Caco-2 (cell line): ENCODE measurements at regions of chr2 and their contacts with region 1.

Region 1: GRCh38 chr2:54558188-54559005 is 102.3 kb downstream of the SPTBN1 start:
- DNase-seq: peak; percentile 80
- H3K4me3 ChIP-seq: peak overlapping the region; percentile 84
- H3K4me3 Mint-ChIP-seq: peak overlapping the region; percentile 87
- H3K27ac Mint-ChIP-seq: peak overlapping the region; percentile 73
- H3K4me1 ChIP-seq: peaks cover 42% of the 10 kb centered on the region
- H3K4me1 Mint-ChIP-seq: peaks cover 52% of the 10 kb centered on the region
- H3K27me3 ChIP-seq: no peaks in the 10 kb centered on the region
- H3K27me3 Mint-ChIP-seq: no peaks in the 10 kb centered on the region
- CTCF ChIP-seq: no peak

Region 2: GRCh38 chr2:54341656-54342055 is 216.7 kb before region 1 on chr2:
- CTCF ChIA-PET with region 1: no interaction called
- POLR2A ChIA-PET with region 1: no interaction called
- intact Hi-C with region 1: no loop called
- DNase-seq: no peak
- H3K4me3 ChIP-seq: no peak overlapping the region
- H3K4me3 Mint-ChIP-seq: no peak overlapping the region
- H3K27ac Mint-ChIP-seq: no peak overlapping the region
- H3K4me1 ChIP-seq: no peaks in the 10 kb centered on the region
- H3K4me1 Mint-ChIP-seq: no peaks in the 10 kb centered on the region
- H3K27me3 ChIP-seq: no peaks in the 10 kb centered on the region
- H3K27me3 Mint-ChIP-seq: peaks cover 10% of the 10 kb centered on the region
- CTCF ChIP-seq: no peak

Region 3: DNA sequence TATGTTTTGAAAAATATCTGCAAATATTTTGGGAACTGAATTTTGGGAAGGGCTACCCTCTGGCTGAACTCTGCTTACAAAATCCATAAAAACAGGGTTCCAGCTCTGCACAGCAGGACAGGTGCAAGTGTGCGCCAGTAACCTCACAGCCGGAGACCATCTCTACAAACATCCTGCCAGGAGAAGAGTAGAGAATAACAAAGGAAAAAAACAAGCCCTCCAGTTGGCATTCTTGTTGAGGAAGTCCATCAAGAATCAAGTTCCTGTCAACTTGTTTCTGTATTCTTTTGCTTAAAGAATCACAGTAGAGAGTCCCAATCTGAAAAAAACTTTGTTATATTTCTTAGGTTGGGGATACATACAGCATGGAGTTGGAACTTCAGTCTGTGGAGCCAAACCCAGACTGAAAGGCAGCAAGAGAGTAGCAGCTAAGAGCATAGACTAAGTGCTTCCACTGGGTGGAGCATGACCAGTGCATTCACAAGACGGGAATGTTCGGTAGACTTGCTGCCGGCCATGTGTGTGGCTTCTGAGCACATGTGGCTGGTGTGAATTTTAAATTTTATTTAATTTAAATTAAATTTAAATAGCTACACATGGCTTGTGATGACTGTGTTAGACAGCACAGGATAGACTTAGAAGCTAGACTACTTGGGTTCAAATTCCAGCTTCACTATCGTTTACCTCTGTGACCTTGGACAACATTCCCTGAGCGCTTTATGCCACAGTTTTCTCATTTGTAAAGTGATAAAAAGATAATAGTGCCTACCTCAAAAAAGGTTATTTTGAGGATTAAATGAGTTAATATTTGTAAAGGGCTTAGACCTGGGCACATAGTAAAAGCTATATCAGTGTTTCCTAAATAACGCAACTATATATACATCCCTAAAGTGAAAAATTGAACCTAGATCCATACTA is 60.4 kb before region 1 on chr2:
- CTCF ChIA-PET with region 1: no interaction called
- POLR2A ChIA-PET with region 1: no interaction called
- intact Hi-C with region 1: no loop called
- DNase-seq: peak; percentile 38 to 50
- H3K4me3 ChIP-seq: no peak overlapping the region
- H3K4me3 Mint-ChIP-seq: no peak overlapping the region
- H3K27ac Mint-ChIP-seq: no peak overlapping the region
- H3K4me1 ChIP-seq: no peaks in the 10 kb centered on the region
- H3K4me1 Mint-ChIP-seq: peaks cover 12% of the 10 kb centered on the region
- H3K27me3 ChIP-seq: no peaks in the 10 kb centered on the region
- H3K27me3 Mint-ChIP-seq: no peaks in the 10 kb centered on the region
- CTCF ChIP-seq: peak; percentile 40 to 44

Region 4: DNA sequence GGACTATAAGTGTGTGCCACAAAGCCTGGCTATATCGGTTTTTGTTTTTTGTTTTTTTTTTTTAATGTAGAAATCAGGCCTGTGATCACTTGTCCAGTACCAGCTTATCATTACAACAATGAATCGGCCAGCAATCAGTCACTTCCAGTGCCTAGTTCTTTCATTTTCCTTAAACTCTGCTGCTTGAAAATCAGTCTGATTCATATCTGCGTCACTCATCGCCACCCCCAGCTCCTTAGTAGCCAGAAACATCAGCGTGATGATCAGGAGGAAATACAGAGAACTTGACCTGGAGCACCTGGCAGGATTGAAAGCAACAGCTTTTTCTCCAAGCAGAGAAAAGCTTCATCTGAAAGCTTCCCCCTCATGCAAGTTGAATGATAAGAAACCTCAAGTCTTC is 26.8 kb before region 1 on chr2:
- CTCF ChIA-PET with region 1: no interaction called
- POLR2A ChIA-PET with region 1: interaction called, 3 read pairs
- intact Hi-C with region 1: loop called (anchors 1 kb)
- DNase-seq: no peak
- H3K4me3 ChIP-seq: no peak overlapping the region
- H3K4me3 Mint-ChIP-seq: no peak overlapping the region
- H3K27ac Mint-ChIP-seq: peak overlapping the region; percentile 99
- H3K4me1 ChIP-seq: peaks cover 39% of the 10 kb centered on the region
- H3K4me1 Mint-ChIP-seq: peaks cover 60% of the 10 kb centered on the region
- H3K27me3 ChIP-seq: no peaks in the 10 kb centered on the region
- H3K27me3 Mint-ChIP-seq: no peaks in the 10 kb centered on the region
- CTCF ChIP-seq: no peak

Region 5: DNA sequence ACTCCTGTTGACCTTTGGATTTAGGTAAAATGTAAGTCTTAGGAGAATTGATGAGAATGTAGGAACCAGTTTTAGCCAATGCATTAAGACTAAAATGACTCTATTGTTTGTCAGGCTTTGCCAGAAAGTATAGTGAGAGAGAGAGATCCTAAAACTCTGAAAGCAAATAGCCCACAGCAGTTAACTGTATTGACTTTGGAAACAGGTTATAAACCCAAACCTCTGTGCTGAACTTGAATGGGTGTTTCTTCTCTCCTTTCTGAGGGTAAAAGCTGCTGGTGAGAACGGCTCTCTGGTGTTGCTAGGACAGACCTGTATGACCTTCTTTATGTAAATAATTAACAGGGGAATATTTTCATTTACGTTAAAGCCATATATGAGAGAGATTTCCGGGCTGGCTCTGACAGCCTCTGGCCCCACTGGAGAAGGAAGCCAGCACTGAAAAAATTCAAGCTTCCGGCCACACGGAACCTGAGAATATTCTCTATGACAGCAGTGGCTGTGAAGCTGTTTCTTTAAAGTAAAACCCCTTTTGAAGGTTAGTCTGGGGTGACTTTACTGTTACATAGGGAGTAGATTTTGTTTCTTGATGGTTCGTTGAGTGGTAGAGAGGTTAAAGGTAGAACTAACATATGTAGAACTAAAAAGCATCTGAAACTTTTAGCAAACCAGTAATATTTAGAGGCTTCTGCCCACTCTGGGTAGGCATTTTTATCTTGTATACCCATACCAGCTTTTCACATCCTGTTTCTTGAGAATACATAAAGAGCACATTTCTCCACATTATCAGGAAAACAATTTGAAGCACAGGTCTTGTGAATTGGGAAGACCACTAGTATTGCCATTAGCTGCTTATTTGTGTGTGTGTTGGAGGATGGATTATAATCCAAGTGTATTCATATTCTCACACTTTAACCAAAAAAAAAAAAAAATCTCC is 21.6 kb after region 1 on chr2:
- CTCF ChIA-PET with region 1: interaction called, 10 read pairs
- POLR2A ChIA-PET with region 1: interaction called, 8 read pairs
- intact Hi-C with region 1: no loop called
- DNase-seq: peak; percentile 68 to 76
- H3K4me3 ChIP-seq: 0 out of 2 replicates have a peak overlapping the region, but pooled peaks have one; percentile 8
- H3K4me3 Mint-ChIP-seq: peak overlapping the region; percentile 58
- H3K27ac Mint-ChIP-seq: peak overlapping the region; percentile 77
- H3K4me1 ChIP-seq: peaks cover 72% of the 10 kb centered on the region
- H3K4me1 Mint-ChIP-seq: peaks cover 60% of the 10 kb centered on the region
- H3K27me3 ChIP-seq: no peaks in the 10 kb centered on the region
- H3K27me3 Mint-ChIP-seq: no peaks in the 10 kb centered on the region
- CTCF ChIP-seq: no peak

Region 6: DNA sequence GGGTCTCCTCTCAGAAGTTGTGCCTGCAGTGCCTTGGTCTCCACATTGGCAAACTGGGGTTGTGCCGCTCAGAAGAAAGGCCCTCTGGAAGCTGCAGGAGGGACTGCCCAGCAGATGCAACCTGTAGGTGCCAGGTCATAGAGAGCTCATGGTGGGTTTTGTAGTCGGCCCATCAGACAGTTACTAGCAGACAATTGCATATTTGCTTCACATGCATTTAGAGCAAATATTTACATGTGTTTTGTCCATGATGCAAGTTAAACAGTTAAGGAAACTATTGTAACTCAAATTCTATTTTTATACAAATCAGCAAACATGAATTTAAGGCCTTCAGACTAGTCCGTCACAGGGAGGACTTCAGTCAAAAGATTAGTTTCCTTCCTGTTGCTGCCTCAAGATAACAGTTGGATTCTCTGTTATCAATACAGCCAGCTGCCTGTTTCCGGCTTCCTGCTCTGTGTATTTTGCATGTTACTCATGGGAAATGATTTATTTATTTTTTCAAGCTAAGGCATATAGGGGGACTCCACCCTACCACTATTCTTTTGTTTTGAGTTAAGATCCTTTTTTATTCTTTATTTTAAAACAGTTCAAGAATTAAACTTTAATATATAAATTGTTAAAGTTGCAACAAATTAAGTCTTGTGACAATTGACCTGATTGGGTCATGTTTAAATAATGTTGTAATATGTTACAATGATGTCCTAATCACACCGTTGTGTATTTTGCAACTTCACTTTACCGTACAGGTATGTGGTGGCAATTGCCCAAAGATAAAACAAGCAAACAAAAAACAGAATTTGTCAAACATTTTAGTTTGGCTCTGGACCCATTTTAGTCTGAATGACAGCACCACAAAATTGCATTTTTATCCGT is 31.2 kb after region 1 on chr2:
- CTCF ChIA-PET with region 1: interaction called, 4 read pairs
- POLR2A ChIA-PET with region 1: no interaction called
- intact Hi-C with region 1: loop called (anchors 1 kb)
- DNase-seq: peak in 1 of 2 experiments; percentile 42
- H3K4me3 ChIP-seq: no peak overlapping the region
- H3K4me3 Mint-ChIP-seq: no peak overlapping the region
- H3K27ac Mint-ChIP-seq: peak overlapping the region; percentile 45
- H3K4me1 ChIP-seq: peaks cover 19% of the 10 kb centered on the region
- H3K4me1 Mint-ChIP-seq: peaks cover 46% of the 10 kb centered on the region
- H3K27me3 ChIP-seq: no peaks in the 10 kb centered on the region
- H3K27me3 Mint-ChIP-seq: no peaks in the 10 kb centered on the region
- CTCF ChIP-seq: no peak